Posterior vena cava (tissue), 2 donors: ENCODE measurements at regions of chr6 and their contacts with region 1.

Region 1: GRCh38 chr6:30883685-30884520 is at the start of gene DDR1:
- DNase-seq: peak; percentile 89
- total RNA-seq, gene DDR1: 25.2 to 26.0 TPM

Region 2: GRCh38 chr6:30600451-30600961 is 283.4 kb before region 1 on chr6:
- intact Hi-C with region 1: no loop called
- DNase-seq: peak; percentile 78

Region 3: DNA sequence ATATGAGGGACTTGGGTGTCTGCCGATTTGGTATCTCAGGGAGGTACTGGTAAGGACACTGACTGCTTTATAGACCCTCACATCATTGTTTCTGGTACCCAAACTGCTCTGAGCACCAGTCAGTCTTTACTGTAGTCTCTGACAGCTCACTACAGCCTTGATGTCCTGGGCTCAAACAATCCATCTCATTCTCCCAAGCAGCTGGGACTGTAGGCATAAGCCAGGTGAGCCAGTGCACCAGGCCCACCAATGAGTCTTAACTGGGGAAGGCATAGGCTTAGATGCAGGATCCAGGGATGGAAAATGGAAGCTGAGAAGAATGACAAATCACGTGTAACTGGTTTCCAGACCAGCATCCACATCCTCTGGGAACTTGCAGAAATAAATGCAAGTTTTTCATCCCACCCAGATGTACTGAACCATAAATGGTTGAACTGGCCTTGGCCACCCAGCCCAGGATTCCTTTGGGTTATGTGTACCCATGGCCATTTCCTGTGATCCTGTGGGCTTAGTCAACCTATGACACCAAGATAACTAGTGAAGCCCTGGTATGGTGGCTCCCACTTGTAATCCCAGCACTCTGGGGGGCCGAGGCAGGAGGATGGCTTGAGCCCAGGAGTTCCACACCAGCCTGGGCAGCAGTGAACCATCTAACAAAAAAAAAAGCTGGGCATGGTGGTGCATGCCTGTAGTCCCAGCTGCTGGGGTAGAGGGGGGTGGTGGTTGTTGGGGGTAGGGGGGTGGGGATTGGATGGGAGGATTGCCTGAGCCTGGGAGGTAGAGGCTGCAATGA is 158.0 kb before region 1 on chr6:
- intact Hi-C with region 1: loop called in 1 of 2 experiments (anchors 5 kb)
- DNase-seq: peak; percentile 12

Region 4: GRCh38 chr6:30857549-30857948 is 26.4 kb before region 1 on chr6:
- intact Hi-C with region 1: loop called in 1 of 2 experiments (anchors 1 kb)
- DNase-seq: peak; percentile 20